ENCODE measurements at regions of chr17 and their contacts with region 1.

Region 1: GRCh38 chr17:19447085-19447583 is 36.1 kb downstream of the RNF112 start:
- DNase-seq: peak; percentile 60
- H3K27ac ChIP-seq: peak overlapping the region; percentile 93
- CTCF ChIP-seq: peak; percentile 88

Region 2: DNA sequence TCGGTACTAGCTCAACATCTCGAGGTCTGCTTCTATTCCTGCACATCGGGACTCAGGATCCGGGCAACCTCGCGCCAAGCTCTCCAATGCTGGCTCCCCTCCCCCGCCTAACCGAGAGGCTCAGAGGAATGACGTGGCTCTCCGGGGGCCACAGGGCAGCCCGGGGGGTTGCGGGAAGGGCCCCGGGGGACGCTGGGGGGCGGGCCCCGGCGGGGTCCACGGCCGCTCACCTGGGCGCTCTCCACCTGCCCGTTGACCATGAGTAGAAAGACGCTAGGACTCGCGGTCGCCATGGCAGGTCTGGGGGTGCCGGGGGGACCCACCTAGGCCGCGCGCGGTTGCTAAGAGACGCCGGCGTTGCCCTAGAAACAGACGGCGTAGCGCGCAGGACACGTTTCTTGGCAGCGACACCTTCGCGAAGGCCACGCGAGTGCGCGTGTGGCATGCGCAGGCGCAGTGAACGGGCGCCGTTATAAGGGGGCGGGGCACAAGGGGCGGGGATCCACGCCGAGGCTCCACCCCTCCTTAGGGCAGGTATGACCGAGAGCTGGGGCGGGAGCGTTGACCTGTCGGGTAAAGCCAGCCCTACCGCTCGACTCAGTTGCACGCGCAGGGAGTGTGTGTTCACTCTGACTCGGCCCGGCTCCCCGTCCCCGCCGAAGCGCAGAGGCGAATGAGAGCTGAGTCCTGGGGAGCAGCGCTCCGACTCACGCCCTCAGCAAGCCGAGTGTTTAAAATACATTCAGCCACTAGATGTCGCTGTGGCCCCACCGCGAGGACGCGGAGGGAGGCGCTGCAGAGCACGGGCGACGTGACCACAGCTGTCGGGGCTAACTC is 84.6 kb before region 1 on chr17 and contains the start of gene B9D1:
- CTCF ChIA-PET with region 1: interaction called, 40 read pairs
- POLR2A ChIA-PET with region 1: no interaction called
- DNase-seq: peak; percentile 97
- H3K27ac ChIP-seq: peak within 1 kb of the TSS; percentile 89
- CTCF ChIP-seq: peak; percentile 90

Region 3: DNA sequence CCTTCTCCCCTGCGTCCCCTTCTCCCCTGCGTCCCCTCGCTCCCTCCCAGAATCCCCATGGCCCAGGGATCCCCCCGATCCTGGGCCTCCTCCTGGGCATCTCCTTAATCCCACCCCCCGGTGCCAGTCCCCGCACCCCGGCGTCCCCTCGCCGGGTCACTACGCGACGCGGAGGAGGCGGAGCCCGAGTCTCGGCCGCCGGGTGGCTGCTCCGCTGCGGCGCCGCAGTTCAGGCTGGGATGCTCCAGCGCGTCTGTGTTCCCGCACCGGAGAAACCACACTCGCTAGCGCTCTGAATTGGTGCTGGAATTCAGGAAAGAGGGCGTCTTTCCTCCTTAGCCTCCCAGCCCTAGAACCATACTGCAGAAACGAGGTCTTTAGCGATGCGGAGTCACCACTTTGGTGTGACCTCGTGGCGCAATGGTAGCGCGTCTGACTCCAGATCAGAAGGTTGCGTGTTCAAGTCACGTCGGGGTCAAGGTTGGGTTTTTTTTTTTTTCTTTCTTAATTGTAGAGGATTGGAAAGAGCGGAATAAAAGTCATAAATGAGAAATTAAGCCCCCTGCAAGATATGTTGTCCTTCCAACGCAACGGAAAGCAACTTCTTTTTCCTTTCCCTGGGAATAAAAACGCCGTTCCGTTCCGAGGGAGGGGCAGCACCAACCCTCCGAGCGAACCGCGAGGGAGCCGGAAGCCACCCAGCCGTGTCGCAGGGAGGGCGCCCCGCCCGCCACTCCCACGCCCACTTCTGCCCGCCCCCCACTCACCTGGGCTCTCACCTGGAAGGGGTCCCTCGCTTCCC is 60.8 kb after region 1 on chr17:
- CTCF ChIA-PET with region 1: no interaction called
- POLR2A ChIA-PET with region 1: no interaction called
- DNase-seq: peak; percentile 89
- H3K27ac ChIP-seq: peak overlapping the region; percentile 95
- CTCF ChIP-seq: no peak